Activated CD4-positive, alpha-beta T cell treated with anti-CD3 and anti-CD28 coated beads for 36 hours (primary cell): ENCODE measurements at regions of chr19 and their contacts with region 1.

Region 1: DNA sequence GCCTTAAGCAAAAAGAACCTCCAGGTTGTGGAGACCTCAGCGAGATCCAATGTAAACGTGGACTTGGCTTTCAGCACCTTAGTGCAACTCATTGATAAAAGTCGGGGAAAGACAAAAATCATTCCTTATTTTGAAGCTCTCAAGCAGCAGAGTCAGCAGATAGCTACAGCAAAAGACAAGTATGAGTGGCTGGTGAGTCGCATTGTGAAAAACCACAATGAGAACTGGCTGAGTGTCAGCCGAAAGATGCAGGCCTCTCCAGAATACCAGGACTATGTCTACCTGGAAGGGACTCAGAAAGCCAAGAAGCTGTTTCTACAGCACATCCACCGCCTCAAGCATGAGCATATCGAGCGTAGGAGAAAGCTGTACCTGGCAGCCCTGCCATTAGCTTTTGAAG is 58.5 kb downstream of the ARHGAP35 start:
- DNase-seq: peak; percentile 60
- ATAC-seq: peak; percentile 85
- H3K4me3 Mint-ChIP-seq: no peak overlapping the region
- H3K27ac Mint-ChIP-seq: no peak overlapping the region
- H3K4me1 Mint-ChIP-seq: peaks cover 48% of the 10 kb centered on the region
- H3K27me3 Mint-ChIP-seq: no peaks in the 10 kb centered on the region

Region 2: DNA sequence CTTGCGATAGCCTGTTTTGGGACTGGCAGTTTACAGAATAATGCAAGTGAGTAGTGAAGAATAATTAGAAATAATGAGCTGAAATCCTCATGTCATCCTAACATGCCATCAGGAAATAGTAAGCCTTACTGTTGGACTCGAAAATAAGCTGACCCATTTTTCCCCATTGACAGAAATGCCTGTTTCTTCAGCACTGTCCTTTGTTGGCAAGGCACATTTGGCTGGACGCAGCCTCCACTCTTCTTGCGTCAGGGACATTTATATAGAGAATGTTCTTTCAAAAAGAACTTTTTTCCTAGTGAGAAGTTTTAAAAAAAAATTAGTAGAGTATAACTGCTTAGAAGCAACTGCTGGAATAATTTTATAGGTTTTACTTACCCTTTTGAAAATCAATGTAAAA is 11.4 kb before region 1 on chr19:
- CTCF ChIA-PET with region 1: interaction called, 13 read pairs
- POLR2A ChIA-PET with region 1: no interaction called
- intact Hi-C with region 1: no loop called
- DNase-seq: no peak
- ATAC-seq: no peak
- H3K4me3 Mint-ChIP-seq: no peak overlapping the region
- H3K27ac Mint-ChIP-seq: no peak overlapping the region
- H3K4me1 Mint-ChIP-seq: peaks cover 30% of the 10 kb centered on the region
- H3K27me3 Mint-ChIP-seq: no peaks in the 10 kb centered on the region